ENCODE measurements at regions of chr7 and their contacts with region 1.

Region 1: GRCh38 chr7:155951554-155952158 is 139.4 kb upstream of the SHH start:
- DNase-seq: peak; percentile 91
- H3K4me3 Mint-ChIP-seq: peak overlapping the region; percentile 54
- H3K27ac Mint-ChIP-seq: peak overlapping the region; percentile 97
- H3K4me1 Mint-ChIP-seq: peaks cover 47% of the 10 kb centered on the region
- H3K27me3 Mint-ChIP-seq: no peaks in the 10 kb centered on the region
- CTCF ChIP-seq: no peak

Region 2: GRCh38 chr7:155844019-155844453 is 107.6 kb before region 1 on chr7:
- CTCF ChIA-PET with region 1: no interaction called
- intact Hi-C with region 1: loop called (anchors 1 kb)
- DNase-seq: peak; percentile 96
- H3K4me3 Mint-ChIP-seq: no peak overlapping the region
- H3K27ac Mint-ChIP-seq: peak overlapping the region; percentile 58
- H3K4me1 Mint-ChIP-seq: peaks cover 12% of the 10 kb centered on the region
- H3K27me3 Mint-ChIP-seq: no peaks in the 10 kb centered on the region
- CTCF ChIP-seq: no peak

Region 3: DNA sequence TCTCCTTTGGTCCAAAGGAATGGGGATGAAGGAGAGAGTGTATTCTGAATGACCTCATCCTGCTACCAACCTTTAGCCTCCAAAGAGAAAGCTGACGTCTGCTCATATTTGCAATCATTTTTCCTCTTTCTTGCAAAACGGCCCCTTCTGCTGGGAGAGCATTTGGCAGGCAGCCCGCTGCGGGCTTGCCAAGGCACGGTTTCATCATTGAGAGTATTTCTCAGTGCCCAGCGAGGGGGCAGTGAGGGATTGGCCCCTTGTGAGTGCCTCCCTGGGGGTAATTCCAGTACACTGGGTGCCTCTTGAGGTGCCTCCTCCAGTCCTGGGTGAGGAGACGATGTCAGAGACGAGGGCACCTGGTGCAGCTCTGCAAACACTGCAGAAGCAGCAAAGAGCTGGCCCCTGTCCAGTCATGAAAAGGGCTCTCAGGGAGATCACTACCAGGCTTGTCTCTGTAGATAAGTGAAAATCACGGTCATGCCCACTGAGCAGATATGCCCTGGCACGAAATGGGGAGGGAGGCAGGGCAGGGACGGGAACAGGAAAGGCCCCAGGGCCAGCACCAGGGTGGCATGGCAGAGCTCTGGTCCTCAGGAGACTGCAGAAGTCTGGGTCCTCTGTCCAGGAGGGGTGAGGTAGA is 90.7 kb before region 1 on chr7:
- CTCF ChIA-PET with region 1: interaction called, 3 read pairs
- intact Hi-C with region 1: loop called (anchors 5 kb)
- DNase-seq: peak; percentile 88
- H3K4me3 Mint-ChIP-seq: peak overlapping the region; percentile 6
- H3K27ac Mint-ChIP-seq: peak overlapping the region; percentile 34
- H3K4me1 Mint-ChIP-seq: peaks cover 21% of the 10 kb centered on the region
- H3K27me3 Mint-ChIP-seq: peaks cover 19% of the 10 kb centered on the region
- CTCF ChIP-seq: no peak

Region 4: DNA sequence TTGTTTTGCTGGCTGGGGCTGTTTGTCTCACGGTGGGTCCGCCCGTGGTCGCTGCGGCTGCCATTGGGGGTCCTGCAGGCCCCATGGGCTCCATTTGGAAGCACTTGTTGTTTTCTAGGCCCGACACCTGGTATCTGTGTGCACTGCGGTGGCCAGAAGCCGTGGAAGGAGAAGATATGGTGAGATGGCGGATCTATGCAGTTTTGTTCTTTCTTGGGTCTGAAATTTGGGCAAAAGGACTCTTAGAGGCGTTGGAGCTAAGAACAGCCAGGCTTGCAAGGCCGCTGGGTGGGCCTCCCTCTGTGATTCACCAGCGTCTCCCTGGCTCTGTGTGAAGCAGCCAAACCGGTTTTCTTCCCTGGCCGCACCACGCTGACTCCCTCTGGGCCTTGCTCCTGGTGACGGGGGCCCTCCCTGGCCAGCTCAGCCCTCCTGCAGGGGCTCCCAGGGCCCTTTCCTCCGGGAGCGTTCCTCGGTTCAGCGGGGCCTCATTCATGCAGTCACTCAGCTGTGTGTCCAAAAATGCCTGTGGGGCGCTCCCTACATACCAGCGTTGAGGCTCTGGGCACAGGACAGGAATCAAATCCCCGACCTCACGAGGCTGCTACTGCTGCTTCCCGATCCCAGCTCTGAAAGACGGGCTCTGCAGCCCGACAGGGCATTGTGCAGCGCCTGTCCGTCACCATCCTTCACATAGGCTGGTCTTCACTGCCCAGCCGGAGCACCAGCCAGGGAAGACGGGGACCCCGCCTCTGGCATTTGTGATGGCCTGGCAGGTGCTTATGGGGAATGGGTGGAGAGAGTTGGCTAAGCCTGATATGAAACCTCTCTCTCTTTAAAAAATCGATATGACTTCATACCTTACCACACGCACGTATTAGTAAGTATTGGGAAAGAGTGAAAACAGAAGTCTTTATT is 29.6 kb before region 1 on chr7:
- CTCF ChIA-PET with region 1: no interaction called
- intact Hi-C with region 1: loop called (anchors 1 kb)
- DNase-seq: peak; percentile 92
- H3K4me3 Mint-ChIP-seq: peak overlapping the region; percentile 65
- H3K27ac Mint-ChIP-seq: peak overlapping the region; percentile 95
- H3K4me1 Mint-ChIP-seq: peaks cover 73% of the 10 kb centered on the region
- H3K27me3 Mint-ChIP-seq: no peaks in the 10 kb centered on the region
- CTCF ChIP-seq: no peak

Region 5: GRCh38 chr7:156156734-156157610 is 205.3 kb after region 1 on chr7:
- CTCF ChIA-PET with region 1: interaction called, 6 read pairs
- intact Hi-C with region 1: loop called (anchors 5 kb)
- DNase-seq: peak; percentile 64
- H3K4me3 Mint-ChIP-seq: no peak overlapping the region
- H3K27ac Mint-ChIP-seq: no peak overlapping the region
- H3K4me1 Mint-ChIP-seq: peaks cover 25% of the 10 kb centered on the region
- H3K27me3 Mint-ChIP-seq: no peaks in the 10 kb centered on the region
- CTCF ChIP-seq: peak; percentile 42

Region 6: GRCh38 chr7:156192921-156193320 is 241.3 kb after region 1 on chr7:
- CTCF ChIA-PET with region 1: no interaction called
- intact Hi-C with region 1: no loop called
- DNase-seq: no peak
- H3K4me3 Mint-ChIP-seq: no peak overlapping the region
- H3K27ac Mint-ChIP-seq: no peak overlapping the region
- H3K4me1 Mint-ChIP-seq: no peaks in the 10 kb centered on the region
- H3K27me3 Mint-ChIP-seq: peaks cover 43% of the 10 kb centered on the region
- CTCF ChIP-seq: no peak